Activated CD8-positive, alpha-beta memory T cell treated with anti-CD3 and anti-CD28 coated beads, Interleukin-2, amount 10 ng/mL, durations not matched to agents 7 days and 5 days (primary cell): ENCODE measurements at regions of chr16 and their contacts with region 1.

Region 1: GRCh38 chr16:67641779-67642708 is 2.9 kb upstream of the CARMIL2 start:
- DNase-seq: no peak
- ATAC-seq: no peak
- H3K4me3 Mint-ChIP-seq: no peak overlapping the region
- H3K27ac Mint-ChIP-seq: no peak overlapping the region
- H3K4me1 Mint-ChIP-seq: peaks cover 15% of the 10 kb centered on the region
- H3K27me3 Mint-ChIP-seq: no peaks in the 10 kb centered on the region

Region 2: GRCh38 chr16:67514382-67514828 is 127.6 kb before region 1 on chr16:
- CTCF ChIA-PET with region 1: interaction called, 35 read pairs
- DNase-seq: peak; percentile 89
- ATAC-seq: peak; percentile 82
- H3K4me3 Mint-ChIP-seq: no peak overlapping the region
- H3K27ac Mint-ChIP-seq: peak overlapping the region; percentile 78
- H3K4me1 Mint-ChIP-seq: peaks cover 20% of the 10 kb centered on the region
- H3K27me3 Mint-ChIP-seq: no peaks in the 10 kb centered on the region

Region 3: DNA sequence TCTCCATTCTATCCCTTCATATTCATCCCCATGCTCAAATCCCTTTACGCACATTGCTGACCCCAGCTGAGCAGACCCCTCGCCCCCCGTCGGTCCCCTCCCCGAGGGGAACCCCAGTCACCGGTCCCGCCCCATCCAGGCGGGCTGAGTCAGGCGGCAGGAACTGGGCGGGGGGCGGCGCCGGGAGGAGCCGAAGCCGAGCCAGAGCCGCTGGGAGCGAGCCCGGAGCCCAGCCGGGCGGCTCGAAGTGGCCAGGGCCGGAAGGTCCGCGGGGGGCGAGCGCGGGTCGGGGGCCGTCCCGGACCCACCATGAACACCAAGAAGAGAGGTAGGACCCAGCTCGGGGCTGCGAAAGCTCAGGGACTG is 104.8 kb before region 1 on chr16:
- CTCF ChIA-PET with region 1: interaction called, 28 read pairs
- DNase-seq: peak; percentile 59
- ATAC-seq: peak; percentile 52
- H3K4me3 Mint-ChIP-seq: peak overlapping the region; percentile 76
- H3K27ac Mint-ChIP-seq: peak overlapping the region; percentile 42
- H3K4me1 Mint-ChIP-seq: peaks cover 19% of the 10 kb centered on the region
- H3K27me3 Mint-ChIP-seq: peaks cover 34% of the 10 kb centered on the region

Region 4: DNA sequence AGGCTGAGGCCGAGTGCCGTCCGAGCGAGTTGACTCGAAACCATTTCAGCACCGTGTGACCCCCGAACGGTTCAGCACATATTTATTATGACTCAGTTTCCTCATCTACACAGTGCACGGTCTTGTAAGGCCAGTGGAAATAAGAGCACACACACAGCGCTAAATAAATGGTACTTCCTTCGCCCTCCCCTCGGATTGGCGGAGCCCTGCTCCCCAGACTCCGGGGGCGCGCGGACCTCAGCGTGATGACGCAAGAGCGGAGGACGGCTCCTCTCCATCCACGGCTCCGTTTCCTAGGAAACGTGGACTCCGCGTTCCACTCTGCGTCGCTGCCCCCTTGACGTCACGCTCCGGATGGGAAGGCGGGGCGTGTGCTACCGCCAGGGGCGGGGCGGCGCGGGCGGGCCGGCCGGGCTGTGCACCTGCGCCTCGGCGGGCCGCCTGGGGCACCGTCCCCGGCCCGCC is 18.6 kb after region 1 on chr16 and contains the start of gene PARD6A:
- CTCF ChIA-PET with region 1: interaction called, 43 read pairs
- DNase-seq: peak; percentile 99
- ATAC-seq: peak; percentile 82
- H3K4me3 Mint-ChIP-seq: peak within 1 kb of the TSS; percentile 94
- H3K27ac Mint-ChIP-seq: peak within 1 kb of the TSS; percentile 97
- H3K4me1 Mint-ChIP-seq: peaks cover 20% of the 10 kb centered on the region
- H3K27me3 Mint-ChIP-seq: no peaks in the 10 kb centered on the region
- total RNA-seq, gene PARD6A: 15.2 to 15.5 TPM